ENCODE measurements at regions of chr19 and their contacts with region 1.

Region 1: DNA sequence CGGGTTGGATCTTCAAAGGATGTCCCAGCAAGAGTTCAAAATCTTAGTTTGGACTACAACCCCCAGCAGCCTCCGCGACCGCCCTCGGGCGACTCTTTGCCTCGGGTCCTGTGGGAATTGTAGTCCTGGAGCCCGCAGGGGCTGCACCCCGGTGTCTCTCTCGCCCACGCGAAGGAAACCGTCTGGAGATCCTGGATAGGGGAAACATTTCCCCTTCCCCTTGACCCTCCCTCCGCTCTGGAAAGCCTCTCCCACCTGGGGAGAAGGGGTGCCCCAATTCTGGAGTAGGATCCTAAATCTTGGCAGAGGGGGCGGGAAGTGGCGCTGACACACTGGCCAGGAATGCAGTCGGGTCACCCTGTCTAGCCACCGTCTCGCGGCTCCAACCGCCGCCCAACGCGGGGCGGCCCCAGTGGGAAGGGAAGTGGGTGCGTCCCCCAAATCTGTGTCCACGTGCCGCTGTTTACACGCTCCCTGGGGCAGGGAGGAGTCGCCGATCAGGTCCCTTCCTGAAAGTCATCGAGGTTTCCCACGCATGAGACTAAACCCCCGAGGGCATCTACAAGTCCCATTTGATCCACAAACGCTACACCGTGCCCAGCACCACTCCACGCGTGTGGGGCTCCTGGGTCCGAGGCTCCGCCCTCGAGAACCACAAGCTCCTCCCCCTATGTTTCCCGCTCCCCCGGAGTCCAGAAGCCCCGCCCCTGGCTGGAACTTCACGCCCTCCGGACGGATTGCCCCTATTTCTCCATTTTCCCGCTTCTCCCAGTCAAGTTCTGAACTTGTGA is 761 bp upstream of the PPP1R13L start:
- DNase-seq: peak; percentile 89
- ATAC-seq: peak; percentile 66
- H3K4me3 ChIP-seq: peak overlapping the region; percentile 72 to 97 (median 80)
- H3K4me3 Mint-ChIP-seq: peak overlapping the region; percentile 93
- H3K27ac ChIP-seq: peak overlapping the region; percentile 81 to 92
- H3K27ac Mint-ChIP-seq: peak overlapping the region; percentile 92
- H3K4me1 ChIP-seq: peaks cover 34 to 43% of the 10 kb centered on the region in 2 donors
- H3K4me1 Mint-ChIP-seq: peaks cover 46% of the 10 kb centered on the region
- H3K27me3 ChIP-seq: peaks cover 0 to 30% (median 17%) of the 10 kb centered on the region in 4 experiments
- H3K27me3 Mint-ChIP-seq: peaks cover 13% of the 10 kb centered on the region
- CTCF ChIP-seq: no peak

Region 2: DNA sequence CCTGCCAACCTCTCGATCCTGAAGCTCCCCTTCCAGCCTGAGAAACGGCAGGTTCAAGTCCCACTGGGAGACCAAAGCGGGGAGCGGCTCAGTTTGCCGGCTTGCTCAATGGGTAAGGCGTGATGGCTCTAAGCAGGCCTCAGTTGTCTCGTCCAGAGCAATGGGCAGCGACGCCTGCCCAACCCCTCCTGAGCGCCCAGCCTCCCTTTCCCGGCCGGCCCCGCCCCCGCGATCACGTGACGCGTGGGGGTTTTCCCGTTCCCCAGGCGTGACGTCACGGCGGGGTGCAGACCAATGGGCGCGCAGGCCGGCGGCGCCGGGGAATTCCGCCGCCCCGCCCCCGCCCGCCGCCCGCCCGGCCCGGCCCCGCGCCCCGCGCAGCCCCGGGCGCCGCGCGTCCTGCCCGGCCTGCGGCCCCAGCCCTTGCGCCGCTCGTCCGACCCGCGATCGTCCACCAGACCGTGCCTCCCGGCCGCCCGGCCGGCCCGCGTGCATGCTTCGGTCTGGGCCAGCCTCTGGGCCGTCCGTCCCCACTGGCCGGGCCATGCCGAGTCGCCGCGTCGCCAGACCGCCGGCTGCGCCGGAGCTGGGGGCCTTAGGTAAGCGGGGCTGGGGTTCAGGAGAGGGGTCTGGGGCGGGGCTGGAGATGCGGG is 404.4 kb before region 1 on chr19 and contains the start of gene RELB:
- CTCF ChIA-PET with region 1: no interaction called
- POLR2A ChIA-PET with region 1: no interaction called
- intact Hi-C with region 1: loop called (anchors 5 kb)
- DNase-seq: peak; percentile 96
- ATAC-seq: peak; percentile 48
- H3K4me3 ChIP-seq: peak within 1 kb of the TSS in 4 of 5 experiments; percentile 75 to 95 (median 82)
- H3K4me3 Mint-ChIP-seq: peak within 1 kb of the TSS; percentile 96
- H3K27ac ChIP-seq: peak within 1 kb of the TSS; percentile 100
- H3K27ac Mint-ChIP-seq: peak within 1 kb of the TSS; percentile 97
- H3K4me1 ChIP-seq: peaks cover 13 to 15% of the 10 kb centered on the region in 2 donors
- H3K4me1 Mint-ChIP-seq: peaks cover 32% of the 10 kb centered on the region
- H3K27me3 ChIP-seq: no peaks in the 10 kb centered on the region
- H3K27me3 Mint-ChIP-seq: no peaks in the 10 kb centered on the region
- CTCF ChIP-seq: no peak
- total RNA-seq, gene RELB: 106 and 111 TPM in 2 replicates

Region 3: GRCh38 chr19:45423589-45424190 is 18.1 kb after region 1 on chr19 and contains the start of gene ERCC1:
- CTCF ChIA-PET with region 1: interaction called, 14 read pairs
- POLR2A ChIA-PET with region 1: interaction called, 3 read pairs
- intact Hi-C with region 1: loop called (anchors 1 kb)
- DNase-seq: peak; percentile 87
- ATAC-seq: peak; percentile 79
- H3K4me3 ChIP-seq: peak within 1 kb of the TSS; percentile 26 to 77 (median 69)
- H3K4me3 Mint-ChIP-seq: peak within 1 kb of the TSS; percentile 97
- H3K27ac ChIP-seq: peak within 1 kb of the TSS; percentile 64 to 73
- H3K27ac Mint-ChIP-seq: peak within 1 kb of the TSS; percentile 94
- H3K4me1 ChIP-seq: peaks cover 36 to 62% of the 10 kb centered on the region in 2 donors
- H3K4me1 Mint-ChIP-seq: peaks cover 58% of the 10 kb centered on the region
- H3K27me3 ChIP-seq: peaks cover 0 to 11% (median 4%) of the 10 kb centered on the region in 4 experiments
- H3K27me3 Mint-ChIP-seq: peaks cover 11% of the 10 kb centered on the region
- CTCF ChIP-seq: no peak
- total RNA-seq, gene ERCC1: 75.7 and 80.2 TPM in 2 replicates

Region 4: DNA sequence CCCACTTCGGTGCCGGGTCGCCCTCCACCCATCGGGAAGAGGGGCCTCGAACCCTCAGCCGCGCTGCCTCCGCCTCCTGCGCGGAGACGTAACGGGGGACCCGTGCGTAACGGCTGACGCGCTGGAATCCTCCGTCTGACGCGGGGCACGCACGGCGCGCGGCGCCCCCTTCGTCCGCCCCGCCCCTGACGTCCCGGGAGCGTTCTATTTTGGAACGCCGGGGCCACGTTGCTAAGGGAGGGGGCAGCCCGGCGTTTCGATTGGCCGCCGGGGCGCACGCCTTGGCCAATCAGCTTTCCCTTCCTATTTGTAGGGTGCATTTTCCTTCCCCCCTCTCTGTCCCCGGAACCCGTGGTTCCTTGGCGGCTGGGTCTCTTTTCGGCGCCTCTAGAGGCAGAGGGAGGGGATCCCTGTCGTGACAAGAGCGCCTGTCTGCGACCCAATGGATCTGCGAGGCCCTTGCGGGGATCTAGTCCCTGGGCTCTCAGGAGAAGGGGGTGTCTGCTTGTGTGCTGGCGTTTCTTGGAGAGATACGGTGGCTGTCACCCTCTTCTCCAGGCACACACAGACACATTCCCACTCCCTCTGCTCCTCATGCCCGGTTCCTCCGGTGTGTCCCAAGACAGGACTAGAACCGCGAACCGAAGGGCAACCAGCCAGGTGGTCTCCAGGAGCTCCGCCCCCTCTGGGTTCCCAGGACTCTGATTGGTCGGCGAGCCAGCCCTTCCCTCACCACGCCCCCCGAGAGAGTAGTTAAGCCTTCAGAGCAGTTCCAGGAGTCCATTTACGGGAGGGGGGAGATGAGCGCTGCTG is 63.7 kb after region 1 on chr19:
- CTCF ChIA-PET with region 1: interaction called, 4 read pairs
- POLR2A ChIA-PET with region 1: interaction called, 5 read pairs
- intact Hi-C with region 1: loop called (anchors 1 kb)
- DNase-seq: peak; percentile 97
- ATAC-seq: peak; percentile 57
- H3K4me3 ChIP-seq: peak overlapping the region; percentile 59 to 100 (median 95)
- H3K4me3 Mint-ChIP-seq: peak overlapping the region; percentile 92
- H3K27ac ChIP-seq: peak overlapping the region; percentile 96 to 100
- H3K27ac Mint-ChIP-seq: peak overlapping the region; percentile 95
- H3K4me1 ChIP-seq: peaks cover 38 to 57% of the 10 kb centered on the region in 2 donors
- H3K4me1 Mint-ChIP-seq: peaks cover 50% of the 10 kb centered on the region
- H3K27me3 ChIP-seq: peaks cover 0 to 33% (median 15%) of the 10 kb centered on the region in 4 experiments
- H3K27me3 Mint-ChIP-seq: peaks cover 24% of the 10 kb centered on the region
- CTCF ChIP-seq: no peak

Region 5: DNA sequence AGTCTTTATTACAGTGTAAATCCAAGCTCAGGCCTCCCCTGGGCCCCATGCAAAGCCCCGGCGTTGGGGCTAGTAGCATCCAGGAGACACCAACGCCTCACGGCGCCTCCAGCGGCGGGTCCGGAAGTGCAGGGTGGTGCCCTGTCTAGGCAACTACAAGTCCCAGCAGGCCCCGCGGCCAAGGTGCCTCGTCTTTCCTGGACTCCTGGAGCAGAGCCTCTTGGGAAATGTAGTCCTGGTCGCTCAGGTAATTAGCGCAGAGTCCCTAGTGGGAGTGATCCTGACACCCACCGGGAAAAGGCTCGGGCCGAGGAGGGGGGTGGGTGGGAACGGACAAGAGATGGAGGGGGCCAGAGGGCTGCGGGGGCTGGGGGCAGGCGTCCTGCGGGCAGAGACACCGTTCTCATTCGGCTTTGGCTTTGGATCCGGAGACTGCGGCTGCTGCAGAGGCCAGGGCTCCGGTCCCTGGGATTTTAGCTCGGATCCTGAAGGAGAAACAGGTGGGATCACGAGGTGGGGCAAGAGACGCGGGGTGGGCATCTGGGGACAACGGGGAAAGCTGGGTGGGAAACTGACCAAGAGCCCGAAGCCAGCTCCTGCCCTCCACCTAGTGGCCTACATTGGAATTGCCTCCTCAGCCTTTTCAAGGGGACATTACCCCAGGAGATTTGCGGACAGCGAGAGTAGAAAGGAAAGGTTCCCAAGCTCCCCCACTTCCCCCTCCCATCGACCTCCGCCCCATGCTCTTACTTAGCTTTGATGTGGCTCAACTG is 79.9 kb after region 1 on chr19:
- CTCF ChIA-PET with region 1: interaction called, 19 read pairs
- POLR2A ChIA-PET with region 1: no interaction called
- intact Hi-C with region 1: loop called (anchors 1 kb)
- DNase-seq: peak; percentile 96
- ATAC-seq: peak; percentile 99
- H3K4me3 ChIP-seq: peak overlapping the region; percentile 38 to 80 (median 63)
- H3K4me3 Mint-ChIP-seq: peak overlapping the region; percentile 95
- H3K27ac ChIP-seq: no peak overlapping the region
- H3K27ac Mint-ChIP-seq: peak overlapping the region; percentile 76
- H3K4me1 ChIP-seq: peaks cover 3 to 9% of the 10 kb centered on the region in 2 donors
- H3K4me1 Mint-ChIP-seq: peaks cover 11% of the 10 kb centered on the region
- H3K27me3 ChIP-seq: no peaks in the 10 kb centered on the region
- H3K27me3 Mint-ChIP-seq: no peaks in the 10 kb centered on the region
- CTCF ChIP-seq: peak; percentile 92

Region 6: DNA sequence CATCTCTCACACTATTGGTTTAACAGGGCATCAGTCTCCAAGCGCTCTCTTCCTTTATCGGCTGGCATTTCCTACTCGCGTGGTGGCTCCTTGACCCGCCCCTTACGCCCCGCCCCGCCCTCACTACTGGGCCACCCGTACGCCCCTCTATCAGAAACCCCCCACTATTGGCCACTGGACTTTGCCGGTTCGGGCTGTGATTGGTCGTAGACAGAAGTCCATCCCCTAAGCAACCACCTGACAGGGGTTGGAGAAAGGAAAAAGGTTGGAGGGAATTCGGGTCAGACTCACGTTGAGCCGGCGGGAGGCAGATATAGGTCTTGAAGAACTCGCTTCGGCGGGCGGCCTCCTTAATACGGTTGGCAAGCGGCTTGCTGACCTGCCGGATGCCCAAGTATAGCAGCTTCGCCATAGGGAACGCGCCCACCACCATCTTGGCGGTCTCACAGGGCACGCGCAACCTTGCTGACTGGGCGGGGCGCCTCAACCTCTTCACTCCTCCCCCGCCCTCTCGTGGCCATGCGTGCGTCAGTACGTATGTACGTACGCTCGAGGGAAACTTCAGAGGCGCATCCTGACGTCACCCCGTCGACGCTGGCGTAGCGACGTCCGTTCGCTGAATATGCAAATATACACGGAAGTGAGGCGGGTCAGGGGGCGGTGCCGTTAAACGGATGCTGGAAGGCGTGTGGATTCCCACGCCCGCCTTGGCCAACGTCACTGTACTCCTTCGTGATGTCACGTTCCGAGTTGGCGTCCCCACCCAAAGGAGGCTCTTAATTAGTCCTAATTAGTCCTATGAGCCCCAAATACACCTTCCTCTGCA is 178.9 kb after region 1 on chr19 and contains the start of gene OPA3:
- CTCF ChIA-PET with region 1: no interaction called
- POLR2A ChIA-PET with region 1: interaction called, 3 read pairs
- intact Hi-C with region 1: loop called (anchors 1 kb)
- DNase-seq: peak; percentile 100
- ATAC-seq: peak; percentile 87
- H3K4me3 ChIP-seq: peak within 1 kb of the TSS; percentile 62 to 98 (median 82)
- H3K4me3 Mint-ChIP-seq: peak within 1 kb of the TSS; percentile 85
- H3K27ac ChIP-seq: peak within 1 kb of the TSS; percentile 97 to 98
- H3K27ac Mint-ChIP-seq: peak within 1 kb of the TSS; percentile 99
- H3K4me1 ChIP-seq: peaks cover 10 to 15% of the 10 kb centered on the region in 2 donors
- H3K4me1 Mint-ChIP-seq: peaks cover 21% of the 10 kb centered on the region
- H3K27me3 ChIP-seq: no peaks in the 10 kb centered on the region
- H3K27me3 Mint-ChIP-seq: peaks cover 5% of the 10 kb centered on the region
- CTCF ChIP-seq: no peak
- total RNA-seq, gene OPA3: 11.2 and 11.4 TPM in 2 replicates

Region 7: DNA sequence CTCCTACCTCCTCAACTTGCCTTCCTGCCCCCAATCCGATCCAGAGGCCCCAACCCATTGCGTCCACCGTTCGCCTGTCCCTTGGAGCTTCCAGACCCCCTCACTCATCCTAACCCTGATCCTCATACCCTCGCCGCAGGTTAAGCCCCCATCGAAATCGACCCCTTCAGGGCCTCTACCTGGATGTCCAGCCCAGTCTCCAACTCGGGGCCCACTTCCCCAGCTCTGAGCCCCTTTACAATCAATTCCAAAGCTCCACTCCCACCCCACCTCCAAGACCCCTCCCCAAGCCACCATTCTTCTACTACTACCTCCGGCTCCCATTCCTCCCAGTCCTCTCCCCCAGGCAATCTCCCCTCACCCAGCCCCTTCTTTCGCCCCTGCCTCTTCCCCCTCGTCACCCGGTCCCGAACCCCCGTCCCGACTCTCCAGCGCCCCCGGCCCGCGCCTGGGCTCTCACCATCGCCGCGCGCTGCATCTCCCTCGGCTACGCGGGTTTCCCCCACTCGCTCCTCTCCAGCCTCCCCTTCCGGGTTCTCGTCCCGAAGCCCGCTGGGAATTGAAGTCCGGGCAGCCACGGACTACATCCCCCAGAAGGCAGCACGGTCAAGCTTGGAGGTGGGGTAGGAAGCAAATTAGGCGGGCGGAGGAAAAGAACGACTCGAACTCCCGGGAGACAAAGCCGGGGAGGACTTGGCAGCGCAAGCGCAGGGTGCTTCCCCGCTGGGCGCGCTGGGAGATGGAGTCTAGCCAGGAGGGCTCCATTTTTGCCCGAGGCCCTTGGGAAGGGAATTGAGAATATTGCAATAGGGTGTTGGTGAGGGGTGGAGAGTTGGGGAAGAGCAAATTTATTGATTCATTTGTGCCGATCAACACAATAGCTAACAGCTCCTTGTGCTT is 325.0 kb after region 1 on chr19 and contains the start of gene FBXO46:
- CTCF ChIA-PET with region 1: no interaction called
- POLR2A ChIA-PET with region 1: no interaction called
- intact Hi-C with region 1: loop called (anchors 2 kb)
- DNase-seq: peak; percentile 96
- ATAC-seq: peak; percentile 97
- H3K4me3 ChIP-seq: peak within 1 kb of the TSS; percentile 68 to 98 (median 87)
- H3K4me3 Mint-ChIP-seq: peak within 1 kb of the TSS; percentile 94
- H3K27ac ChIP-seq: peak within 1 kb of the TSS; percentile 54 to 94
- H3K27ac Mint-ChIP-seq: peak within 1 kb of the TSS; percentile 94
- H3K4me1 ChIP-seq: peaks cover 11 to 25% of the 10 kb centered on the region in 2 donors
- H3K4me1 Mint-ChIP-seq: peaks cover 28% of the 10 kb centered on the region
- H3K27me3 ChIP-seq: no peaks in the 10 kb centered on the region
- H3K27me3 Mint-ChIP-seq: no peaks in the 10 kb centered on the region
- CTCF ChIP-seq: peak; percentile 26
- total RNA-seq, gene FBXO46: 43.7 and 44.5 TPM in 2 replicates

Measured in B cell (primary cell).